Tibial artery (tissue), 4 donors: ENCODE measurements at regions of chr19 and their contacts with region 1.

Region 1: GRCh38 chr19:6632002-6632621 is 37.8 kb downstream of the TNFSF14 start:
- DNase-seq: peak in 1 of 2 donors; percentile 76
- H3K4me3 ChIP-seq: no peak overlapping the region
- H3K27ac ChIP-seq: no peak overlapping the region
- H3K4me1 ChIP-seq: no peaks in the 10 kb centered on the region
- H3K27me3 ChIP-seq: peaks cover 0 to 11% of the 10 kb centered on the region in 2 donors
- CTCF ChIP-seq: peak; percentile 74 to 79

Region 2: GRCh38 chr19:6443986-6444385 is 188.1 kb before region 1 on chr19:
- intact Hi-C with region 1: no loop called
- DNase-seq: no peak
- H3K4me3 ChIP-seq: no peak overlapping the region
- H3K27ac ChIP-seq: no peak overlapping the region
- H3K4me1 ChIP-seq: no peaks in the 10 kb centered on the region
- H3K27me3 ChIP-seq: no peaks in the 10 kb centered on the region
- CTCF ChIP-seq: no peak

Region 3: DNA sequence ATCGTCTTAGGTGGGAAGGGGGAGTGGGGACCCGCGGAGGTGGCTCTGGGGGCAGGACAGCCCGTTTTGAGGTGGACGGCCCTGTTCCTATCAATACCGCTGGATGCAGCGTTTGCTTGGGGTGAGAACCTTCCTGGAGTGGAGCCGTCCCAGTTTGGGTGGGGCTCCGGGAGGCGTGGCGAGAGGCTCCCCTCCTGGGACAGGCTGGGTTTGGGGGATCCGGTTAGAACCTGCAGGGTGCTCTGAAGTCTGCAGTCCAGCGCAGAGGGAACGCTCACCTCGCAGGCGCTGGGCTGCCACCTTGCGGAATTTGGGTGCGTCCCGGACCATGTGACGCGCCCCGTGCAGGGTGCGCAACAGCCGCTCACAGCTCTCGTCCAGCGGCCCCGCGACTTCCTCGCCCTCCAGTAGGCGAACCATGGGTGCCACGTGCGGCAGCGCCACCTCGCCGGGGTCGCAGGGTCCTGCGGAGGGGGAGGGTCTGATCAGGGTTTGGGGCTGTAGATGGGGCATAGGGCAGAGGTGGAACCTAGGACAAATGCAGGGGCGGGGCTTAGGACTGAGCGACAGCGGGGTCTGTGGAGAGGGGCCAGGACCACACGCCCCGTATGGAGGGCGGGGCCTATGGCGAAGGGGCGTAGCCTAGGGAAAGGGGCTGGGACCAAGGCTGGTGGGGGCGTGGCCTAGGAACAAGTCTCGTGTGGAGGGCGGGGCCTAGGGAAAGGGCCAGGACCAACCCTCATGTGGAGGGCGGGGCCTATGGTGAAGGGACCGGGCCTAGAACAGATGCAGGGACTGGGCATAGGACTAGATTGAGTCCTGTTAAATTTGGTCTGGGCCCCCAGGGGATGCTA is 121.3 kb after region 1 on chr19:
- intact Hi-C with region 1: loop called (anchors 10 kb)
- DNase-seq: peak; percentile 81 to 90
- H3K4me3 ChIP-seq: peak overlapping the region; percentile 37 to 49
- H3K27ac ChIP-seq: peak overlapping the region; percentile 53 to 69
- H3K4me1 ChIP-seq: peaks cover 0 to 11% (median 8%) of the 10 kb centered on the region in 4 donors
- H3K27me3 ChIP-seq: no peaks in the 10 kb centered on the region
- CTCF ChIP-seq: peak; percentile 50 to 58